Activated CD4-positive, alpha-beta T cell treated with anti-CD3 and anti-CD28 coated beads, Interleukin-2, amount 10 ng/mL, durations not matched to agents 7 days and 5 days (primary cell): ENCODE measurements at regions of chr10 and their contacts with region 1.

Region 1: DNA sequence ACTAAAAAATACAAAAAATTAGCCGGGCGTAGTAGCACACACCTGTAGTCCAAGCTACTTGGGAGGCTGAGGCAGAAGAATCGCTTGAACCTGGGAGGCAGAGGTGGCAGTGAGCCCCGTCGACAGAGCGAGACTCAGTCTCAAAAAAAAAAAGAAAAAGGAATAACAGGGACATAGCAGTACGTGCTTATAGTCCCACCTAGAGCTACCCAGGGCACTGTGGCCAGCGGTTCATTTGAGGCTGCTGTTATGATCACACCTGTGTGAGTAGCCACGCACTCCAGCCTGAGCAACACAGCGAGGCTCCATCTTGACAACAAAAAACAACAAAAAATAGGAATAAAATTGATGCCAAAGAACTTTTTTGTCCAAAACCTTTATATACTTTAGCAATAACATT is 17.1 kb downstream of the WAPL start:
- DNase-seq: no peak
- H3K4me3 Mint-ChIP-seq: no peak overlapping the region
- H3K27ac Mint-ChIP-seq: no peak overlapping the region
- H3K4me1 Mint-ChIP-seq: peaks cover 23% of the 10 kb centered on the region
- H3K27me3 Mint-ChIP-seq: no peaks in the 10 kb centered on the region

Region 2: DNA sequence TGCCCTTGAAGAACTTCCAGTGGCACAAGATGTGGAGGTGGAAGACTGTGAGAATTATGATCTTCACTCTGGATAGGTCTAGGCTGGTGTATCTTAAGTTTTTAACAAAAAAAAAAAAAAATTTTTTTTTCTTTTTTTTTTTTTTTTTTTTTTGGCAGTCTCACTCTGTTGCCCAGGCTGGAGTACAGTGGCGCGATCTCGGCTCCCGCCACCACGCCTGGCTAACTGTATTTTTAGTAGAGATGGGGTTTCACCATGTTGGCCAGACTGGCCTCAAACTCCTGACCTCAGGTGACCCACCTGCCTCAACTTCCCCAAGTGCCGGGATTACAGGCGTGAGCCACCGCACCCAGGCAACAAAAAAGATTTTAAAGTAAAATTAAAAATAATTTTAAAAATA is 20.8 kb before region 1 on chr10:
- CTCF ChIA-PET with region 1: no interaction called
- POLR2A ChIA-PET with region 1: no interaction called
- DNase-seq: no peak
- H3K4me3 Mint-ChIP-seq: no peak overlapping the region
- H3K27ac Mint-ChIP-seq: no peak overlapping the region
- H3K4me1 Mint-ChIP-seq: peaks cover 10% of the 10 kb centered on the region
- H3K27me3 Mint-ChIP-seq: no peaks in the 10 kb centered on the region

Region 3: GRCh38 chr10:86710987-86711512 is 206.5 kb after region 1 on chr10:
- CTCF ChIA-PET with region 1: no interaction called
- POLR2A ChIA-PET with region 1: interaction called, 10 read pairs
- DNase-seq: peak; percentile 85
- H3K4me3 Mint-ChIP-seq: peak overlapping the region; percentile 75
- H3K27ac Mint-ChIP-seq: peak overlapping the region; percentile 97
- H3K4me1 Mint-ChIP-seq: peaks cover 16% of the 10 kb centered on the region
- H3K27me3 Mint-ChIP-seq: no peaks in the 10 kb centered on the region